Left cardiac atrium (tissue), 4 donors: ENCODE measurements at regions of chr2 and their contacts with region 1.

Region 1: GRCh38 chr2:156892467-156893281 is 364.8 kb upstream of the GALNT5 start:
- DNase-seq: no peak
- ATAC-seq: peak; percentile 74 to 78

Region 2: DNA sequence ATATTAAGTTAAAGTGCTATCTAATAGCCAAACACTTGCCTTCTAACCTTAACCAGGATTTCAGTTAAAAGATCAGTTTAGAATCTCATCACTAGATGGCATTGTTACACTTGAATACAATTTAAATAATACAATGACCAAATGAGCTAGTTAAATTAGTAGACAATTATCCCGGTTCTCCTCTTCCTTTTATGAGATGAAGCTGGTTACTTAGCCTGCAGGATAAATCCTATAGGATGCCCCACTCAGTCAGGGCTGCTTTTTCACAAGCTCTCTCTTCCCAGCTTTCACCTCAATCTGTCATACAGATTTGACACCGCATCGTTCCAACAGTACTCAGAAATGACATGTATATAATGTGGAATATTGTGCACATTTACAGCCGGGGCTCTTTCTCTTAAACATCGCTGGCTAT is 1515.4 kb before region 1 on chr2:
- intact Hi-C with region 1: loop called in 1 of 2 experiments (anchors 10 kb)
- DNase-seq: no peak
- ATAC-seq: no peak

Region 3: GRCh38 chr2:156649596-156649995 is 243.1 kb before region 1 on chr2:
- intact Hi-C with region 1: loop called in 1 of 2 experiments (anchors 10 kb)
- DNase-seq: peak; percentile 65
- ATAC-seq: peak; percentile 99

Region 4: DNA sequence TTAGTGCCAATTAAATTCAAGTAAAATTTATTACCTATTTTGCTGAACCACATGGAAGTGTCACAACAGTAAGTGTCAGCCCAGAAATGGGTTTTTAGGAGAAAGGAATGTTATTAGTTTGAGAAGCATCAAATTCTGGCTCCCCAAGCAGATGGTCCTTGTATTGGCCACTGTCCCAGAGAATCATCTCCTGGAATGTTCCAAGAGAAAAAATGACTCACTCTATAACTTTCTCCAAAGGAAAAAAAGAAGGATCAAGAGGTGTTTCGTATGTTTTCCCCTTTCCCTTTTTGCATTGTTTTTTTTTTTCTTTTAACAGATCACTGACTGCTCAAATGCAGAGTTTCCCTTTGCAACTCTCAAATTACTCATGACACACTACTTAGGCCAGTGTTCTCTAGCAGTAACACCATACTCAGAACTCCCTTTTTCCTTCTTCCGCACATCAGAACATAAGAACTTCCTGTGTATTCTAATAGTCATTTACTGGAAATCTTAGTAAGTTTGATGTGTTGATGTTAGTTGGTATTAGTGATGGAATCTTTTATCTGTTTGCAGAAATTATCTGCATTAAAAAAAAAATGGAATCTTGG is 66.2 kb before region 1 on chr2:
- intact Hi-C with region 1: no loop called
- DNase-seq: no peak
- ATAC-seq: no peak

Region 5: GRCh38 chr2:157036715-157037114 is 144.0 kb after region 1 on chr2:
- intact Hi-C with region 1: no loop called
- DNase-seq: no peak
- ATAC-seq: no peak